Ascending aorta (tissue), 2 donors: ENCODE measurements at regions of chr6 and their contacts with region 1.

Region 1: GRCh38 chr6:34934516-34934915 is 45.5 kb downstream of the ANKS1A start:
- DNase-seq: peak; percentile 54 to 94
- H3K4me3 ChIP-seq: no peak overlapping the region
- H3K27ac ChIP-seq: no peak overlapping the region
- H3K4me1 ChIP-seq: peaks cover 3 to 12% of the 10 kb centered on the region in 2 donors
- H3K27me3 ChIP-seq: no peaks in the 10 kb centered on the region
- CTCF ChIP-seq: no peak

Region 2: GRCh38 chr6:34917626-34918285 is 16.8 kb before region 1 on chr6:
- intact Hi-C with region 1: loop called (anchors 2 kb)
- DNase-seq: no peak
- H3K4me3 ChIP-seq: no peak overlapping the region
- H3K27ac ChIP-seq: peak overlapping the region; percentile 81 to 92
- H3K4me1 ChIP-seq: peaks cover 13 to 52% of the 10 kb centered on the region in 2 donors
- H3K27me3 ChIP-seq: no peaks in the 10 kb centered on the region
- CTCF ChIP-seq: no peak

Region 3: DNA sequence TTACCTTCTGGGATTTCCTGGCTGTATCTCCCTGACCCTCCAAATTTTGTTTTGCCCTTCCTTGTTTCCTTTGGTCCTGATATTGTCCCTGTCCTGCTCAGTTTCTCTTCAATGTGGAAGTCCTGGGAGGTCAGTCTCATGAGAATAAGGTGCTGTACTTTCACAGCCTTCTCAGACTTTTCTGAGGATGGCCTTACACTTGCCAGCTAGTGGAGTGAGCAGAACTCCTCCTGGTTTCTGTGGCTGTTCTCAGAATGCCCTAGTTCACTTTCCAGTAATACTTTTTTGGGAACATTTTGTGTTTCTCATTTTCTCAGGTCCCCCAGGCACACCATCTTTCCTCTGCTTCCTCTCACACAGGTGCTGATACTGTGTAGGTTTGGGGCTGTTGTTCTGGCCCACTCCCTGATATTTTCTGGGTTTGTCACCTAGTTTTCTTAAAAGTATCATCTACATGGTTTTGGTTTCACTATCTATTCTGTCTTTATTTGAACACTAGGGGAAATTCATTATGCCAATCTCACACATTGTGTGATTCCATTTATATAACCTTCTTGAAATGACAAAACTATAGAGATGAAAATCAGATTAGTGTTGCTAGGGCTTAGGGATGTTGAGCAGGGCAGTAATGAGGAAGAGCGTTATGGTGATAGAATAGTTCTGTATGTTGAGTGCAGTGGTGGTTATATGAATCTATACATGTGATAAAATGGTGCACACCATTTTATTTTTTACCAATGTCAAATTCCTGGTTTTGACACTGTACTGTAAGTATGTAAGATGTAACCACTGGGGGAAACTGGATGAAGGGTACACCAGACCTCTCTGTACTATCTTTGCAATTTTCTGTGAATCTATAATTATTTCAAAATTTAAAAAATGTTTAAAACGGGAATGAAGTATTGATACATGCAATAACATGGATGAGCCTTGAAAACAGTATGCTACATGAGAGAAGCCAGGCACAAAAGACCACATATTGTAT is 1234.8 kb after region 1 on chr6:
- intact Hi-C with region 1: no loop called
- DNase-seq: no peak
- H3K4me3 ChIP-seq: no peak overlapping the region
- H3K27ac ChIP-seq: no peak overlapping the region
- H3K4me1 ChIP-seq: no peaks in the 10 kb centered on the region
- H3K27me3 ChIP-seq: no peaks in the 10 kb centered on the region
- CTCF ChIP-seq: no peak